H1 (cell line): ENCODE measurements at regions of chr12 and their contacts with region 1.

Region 1: GRCh38 chr12:3202734-3203446 is 125.7 kb downstream of the TSPAN9 start:
- DNase-seq: peak in 1 of 2 experiments; percentile 93
- H3K4me3 ChIP-seq: no peak overlapping the region
- H3K27ac ChIP-seq: no peak overlapping the region
- H3K4me1 ChIP-seq: peaks cover 3 to 16% (median 10%) of the 10 kb centered on the region in 4 experiments
- H3K27me3 ChIP-seq: peaks cover 10 to 43% (median 32%) of the 10 kb centered on the region in 4 experiments
- CTCF ChIP-seq: peak; percentile 92 to 94 (median 93)
- EP300 ChIP-seq: no peak
- POLR2A ChIP-seq: no peak
- RAD21 ChIP-seq: peak; percentile 65 to 77

Region 2: GRCh38 chr12:3135522-3136461 is 67.1 kb before region 1 on chr12:
- CTCF ChIA-PET with region 1: interaction called, 448 read pairs
- POLR2A ChIA-PET with region 1: interaction called, 5 read pairs
- DNase-seq: peak; percentile 58 to 63
- H3K4me3 ChIP-seq: no peak overlapping the region
- H3K27ac ChIP-seq: no peak overlapping the region
- H3K4me1 ChIP-seq: peaks cover 2 to 32% (median 20%) of the 10 kb centered on the region in 4 experiments
- H3K27me3 ChIP-seq: no peaks in the 10 kb centered on the region
- CTCF ChIP-seq: peak in 2 of 3 experiments; percentile 88 to 93; a peak in 3 of 4 replicates
- EP300 ChIP-seq: no peak
- POLR2A ChIP-seq: no peak
- RAD21 ChIP-seq: peak; percentile 97 to 99

Region 3: GRCh38 chr12:3177778-3178425 is 25.0 kb before region 1 on chr12:
- CTCF ChIA-PET with region 1: interaction called, 83 read pairs
- POLR2A ChIA-PET with region 1: no interaction called
- DNase-seq: no peak
- H3K4me3 ChIP-seq: no peak overlapping the region
- H3K27ac ChIP-seq: no peak overlapping the region
- H3K4me1 ChIP-seq: peaks cover 2 to 11% (median 5%) of the 10 kb centered on the region in 4 experiments; a peak in 6 of 7 replicates
- H3K27me3 ChIP-seq: no peaks in the 10 kb centered on the region
- CTCF ChIP-seq: no peak
- EP300 ChIP-seq: no peak
- POLR2A ChIP-seq: no peak
- RAD21 ChIP-seq: no peak

Region 4: GRCh38 chr12:3225154-3225795 is 22.4 kb after region 1 on chr12:
- CTCF ChIA-PET with region 1: interaction called, 110 read pairs
- POLR2A ChIA-PET with region 1: no interaction called
- DNase-seq: no peak
- H3K4me3 ChIP-seq: no peak overlapping the region
- H3K27ac ChIP-seq: no peak overlapping the region
- H3K4me1 ChIP-seq: peaks cover 0 to 18% (median 4%) of the 10 kb centered on the region in 4 experiments; a peak in 3 of 7 replicates
- H3K27me3 ChIP-seq: no peaks in the 10 kb centered on the region
- CTCF ChIP-seq: no peak
- EP300 ChIP-seq: no peak
- POLR2A ChIP-seq: no peak
- RAD21 ChIP-seq: no peak

Region 5: GRCh38 chr12:3242199-3242863 is 39.4 kb after region 1 on chr12:
- CTCF ChIA-PET with region 1: interaction called, 54 read pairs
- POLR2A ChIA-PET with region 1: no interaction called
- DNase-seq: no peak
- H3K4me3 ChIP-seq: no peak overlapping the region
- H3K27ac ChIP-seq: no peak overlapping the region
- H3K4me1 ChIP-seq: peaks cover 0 to under 1% (median 0%) of the 10 kb centered on the region in 4 experiments; a peak in 4 of 7 replicates
- H3K27me3 ChIP-seq: no peaks in the 10 kb centered on the region
- CTCF ChIP-seq: peak in 1 of 3 experiments; percentile 9; a peak in 1 of 4 replicates
- EP300 ChIP-seq: no peak
- POLR2A ChIP-seq: no peak
- RAD21 ChIP-seq: no peak; a peak in 1 of 4 replicates

Region 6: GRCh38 chr12:3288690-3289089 is 85.8 kb after region 1 on chr12:
- CTCF ChIA-PET with region 1: interaction called, 361 read pairs
- POLR2A ChIA-PET with region 1: no interaction called
- DNase-seq: no peak
- H3K4me3 ChIP-seq: no peak overlapping the region
- H3K27ac ChIP-seq: no peak overlapping the region
- H3K4me1 ChIP-seq: peaks cover 0 to 5% (median 2%) of the 10 kb centered on the region in 4 experiments; a peak in 4 of 7 replicates
- H3K27me3 ChIP-seq: no peaks in the 10 kb centered on the region
- CTCF ChIP-seq: no peak
- EP300 ChIP-seq: no peak
- POLR2A ChIP-seq: no peak
- RAD21 ChIP-seq: no peak